Activated CD8-positive, alpha-beta T cell treated with anti-CD3 and anti-CD28 coated beads for 36 hours (primary cell): ENCODE measurements at regions of chr2 and their contacts with region 1.

Region 1: DNA sequence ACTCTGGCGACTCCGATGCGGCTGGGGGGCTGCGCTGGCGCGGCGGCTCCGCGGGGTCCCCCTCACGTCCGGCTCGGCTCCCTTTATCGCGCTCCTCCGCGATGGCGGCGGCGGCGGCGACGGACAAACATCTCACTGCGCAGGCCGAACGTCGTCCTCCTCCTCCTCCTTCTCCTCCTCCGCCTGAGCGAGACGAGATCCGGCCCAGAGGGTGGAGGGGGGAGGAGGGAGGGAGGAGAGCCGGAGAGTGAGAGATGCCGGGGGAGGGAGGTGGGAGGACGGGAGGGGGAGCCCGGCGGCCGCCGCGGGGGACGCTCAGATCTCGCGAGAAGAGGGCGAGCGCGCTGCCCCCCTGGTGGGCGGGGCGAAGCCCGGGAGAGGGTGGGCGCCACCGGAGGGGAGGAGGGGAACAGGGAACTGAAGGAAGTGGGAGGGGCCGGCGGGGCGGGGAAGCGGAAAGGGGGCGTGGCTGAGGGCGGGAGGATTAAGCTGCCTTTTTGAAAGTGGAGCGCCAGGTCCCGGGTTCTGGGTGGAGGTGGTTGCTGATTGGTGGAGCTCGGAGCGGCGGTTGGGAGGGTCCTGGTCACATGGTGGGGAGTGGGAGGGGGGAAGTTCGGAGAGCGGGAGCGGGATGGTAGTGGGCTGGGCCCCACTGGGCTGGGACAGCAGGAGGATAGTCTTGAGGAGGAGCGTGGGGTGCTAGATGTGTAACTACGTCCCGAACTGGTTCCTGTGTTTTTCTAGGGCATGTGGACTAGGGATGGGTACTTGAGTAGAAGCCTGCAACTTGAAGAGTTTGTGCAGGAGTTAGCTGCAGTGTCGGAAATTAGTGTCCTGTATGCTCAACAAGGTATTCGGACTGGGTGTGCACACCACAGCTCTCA is at the start of gene CUL3:
- DNase-seq: peak; percentile 100
- ATAC-seq: peak; percentile 93
- H3K4me3 Mint-ChIP-seq: peak within 1 kb of the TSS; percentile 98
- H3K27ac Mint-ChIP-seq: peak within 1 kb of the TSS; percentile 95
- H3K4me1 Mint-ChIP-seq: peaks cover 29% of the 10 kb centered on the region
- H3K27me3 Mint-ChIP-seq: no peaks in the 10 kb centered on the region
- CTCF ChIP-seq: no peak
- total RNA-seq, gene CUL3: 75.0 to 76.7 TPM

Region 2: DNA sequence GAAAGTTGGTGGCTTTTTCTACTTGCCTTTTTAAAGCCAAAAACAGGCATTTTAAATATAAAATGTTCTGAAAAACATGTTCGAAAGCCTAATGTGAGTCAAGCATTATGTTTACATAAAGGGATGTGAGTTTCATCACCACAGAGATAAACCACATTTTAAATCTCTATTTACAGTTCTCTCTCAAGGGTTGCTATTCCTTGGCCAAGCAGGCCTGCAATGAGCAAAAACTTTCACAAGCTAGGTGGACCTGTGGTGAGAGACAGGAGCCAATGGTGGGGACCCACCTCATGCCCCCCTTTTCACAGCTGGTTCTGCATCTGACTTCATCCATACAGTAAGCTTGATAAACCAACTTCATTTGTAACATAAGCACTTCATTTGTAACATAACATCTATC is 65.4 kb before region 1 on chr2:
- CTCF ChIA-PET with region 1: interaction called, 5 read pairs
- POLR2A ChIA-PET with region 1: interaction called, 11 read pairs
- intact Hi-C with region 1: loop called (anchors 5 kb)
- DNase-seq: peak; percentile 72
- ATAC-seq: peak; percentile 73
- H3K4me3 Mint-ChIP-seq: no peak overlapping the region
- H3K27ac Mint-ChIP-seq: peak overlapping the region; percentile 65
- H3K4me1 Mint-ChIP-seq: peaks cover 58% of the 10 kb centered on the region
- H3K27me3 Mint-ChIP-seq: no peaks in the 10 kb centered on the region
- CTCF ChIP-seq: no peak

Region 3: GRCh38 chr2:224666951-224667553 is 81.6 kb after region 1 on chr2:
- CTCF ChIA-PET with region 1: no interaction called
- POLR2A ChIA-PET with region 1: no interaction called
- intact Hi-C with region 1: no loop called
- DNase-seq: no peak
- ATAC-seq: no peak
- H3K4me3 Mint-ChIP-seq: no peak overlapping the region
- H3K27ac Mint-ChIP-seq: no peak overlapping the region
- H3K4me1 Mint-ChIP-seq: no peaks in the 10 kb centered on the region
- H3K27me3 Mint-ChIP-seq: peaks cover 4% of the 10 kb centered on the region
- CTCF ChIP-seq: no peak

Region 4: GRCh38 chr2:224749136-224749535 is 163.7 kb after region 1 on chr2:
- CTCF ChIA-PET with region 1: no interaction called
- POLR2A ChIA-PET with region 1: no interaction called
- intact Hi-C with region 1: no loop called
- DNase-seq: no peak
- ATAC-seq: no peak
- H3K4me3 Mint-ChIP-seq: no peak overlapping the region
- H3K27ac Mint-ChIP-seq: no peak overlapping the region
- H3K4me1 Mint-ChIP-seq: no peaks in the 10 kb centered on the region
- H3K27me3 Mint-ChIP-seq: peaks cover 2% of the 10 kb centered on the region
- CTCF ChIP-seq: no peak